ENCODE measurements at regions of chr5 and their contacts with region 1.

Region 1: DNA sequence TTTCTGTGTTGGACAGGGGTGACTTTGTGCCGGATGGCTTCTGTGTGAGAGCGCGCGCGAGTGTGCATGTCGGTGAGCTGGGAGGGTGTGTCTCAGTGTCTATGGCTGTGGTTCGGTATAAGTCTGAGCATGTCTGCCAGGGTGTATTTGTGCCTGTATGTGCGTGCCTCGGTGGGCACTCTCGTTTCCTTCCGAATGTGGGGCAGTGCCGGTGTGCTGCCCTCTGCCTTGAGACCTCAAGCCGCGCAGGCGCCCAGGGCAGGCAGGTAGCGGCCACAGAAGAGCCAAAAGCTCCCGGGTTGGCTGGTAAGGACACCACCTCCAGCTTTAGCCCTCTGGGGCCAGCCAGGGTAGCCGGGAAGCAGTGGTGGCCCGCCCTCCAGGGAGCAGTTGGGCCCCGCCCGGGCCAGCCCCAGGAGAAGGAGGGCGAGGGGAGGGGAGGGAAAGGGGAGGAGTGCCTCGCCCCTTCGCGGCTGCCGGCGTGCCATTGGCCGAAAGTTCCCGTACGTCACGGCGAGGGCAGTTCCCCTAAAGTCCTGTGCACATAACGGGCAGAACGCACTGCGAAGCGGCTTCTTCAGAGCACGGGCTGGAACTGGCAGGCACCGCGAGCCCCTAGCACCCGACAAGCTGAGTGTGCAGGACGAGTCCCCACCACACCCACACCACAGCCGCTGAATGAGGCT is at the start of gene ADRB2:
- DNase-seq: peak; percentile 96 to 98 (median 97)
- ATAC-seq: peak; percentile 97 to 98 (median 98)
- H3K4me3 ChIP-seq: peak within 1 kb of the TSS; percentile 55 to 84 (median 62)
- H3K27ac ChIP-seq: peak within 1 kb of the TSS; percentile 79 to 96 (median 90)
- H3K4me1 ChIP-seq: peaks cover 0 to 60% (median 16%) of the 10 kb centered on the region in 12 donors
- H3K27me3 ChIP-seq: no peaks in the 10 kb centered on the region
- CTCF ChIP-seq: peak in 2 of 12 donors; percentile 3 to 19
- POLR2A ChIP-seq: peak; percentile 90 to 99
- total RNA-seq, gene ADRB2: 3.4 to 8.3 (median 6.2) TPM

Region 2: DNA sequence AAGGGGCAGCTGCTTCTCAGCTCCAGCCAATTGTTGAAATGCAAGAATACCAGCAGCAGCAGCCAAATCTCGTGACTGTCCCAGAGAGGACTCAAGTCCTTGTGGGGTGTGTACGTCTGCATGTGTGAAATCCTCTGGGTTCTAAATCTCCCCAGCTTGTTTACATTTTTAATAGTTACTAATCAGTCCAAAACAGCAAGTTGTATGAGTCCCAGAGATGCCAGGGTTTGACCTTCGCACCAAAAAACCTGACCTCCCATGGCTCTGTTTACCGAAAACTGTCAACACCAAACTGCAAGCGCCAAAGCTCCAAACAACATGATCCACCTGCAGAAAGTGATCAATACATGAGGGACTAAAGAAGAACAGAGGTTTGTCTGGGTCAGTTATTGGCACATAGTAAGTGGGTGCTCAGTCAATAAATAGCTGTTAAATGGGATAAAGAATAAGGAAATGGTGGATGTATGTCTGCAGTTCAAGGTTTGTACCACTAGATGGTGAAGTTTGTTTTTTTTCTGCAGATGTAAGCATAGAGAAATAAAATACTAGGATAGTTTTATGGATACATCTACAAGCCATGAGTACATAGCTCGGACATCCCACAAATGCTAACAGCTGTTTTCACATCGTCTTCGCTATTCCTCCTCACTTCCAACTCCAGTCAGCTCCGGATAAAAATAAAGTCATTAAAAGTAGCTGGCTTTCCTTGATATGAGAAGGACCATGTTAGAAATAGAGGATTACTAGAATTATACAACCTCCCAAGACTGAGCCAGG is 85.0 kb before region 1 on chr5:
- intact Hi-C with region 1: loop called in 4 of 10 experiments (anchors 5 kb)
- DNase-seq: peak in 1 of 5 donors; percentile 43
- ATAC-seq: peak; percentile 55 to 78 (median 74)
- H3K4me3 ChIP-seq: no peak overlapping the region
- H3K27ac ChIP-seq: peak overlapping the region in 1 of 12 donors; percentile 12
- H3K4me1 ChIP-seq: peaks cover 0 to 33% (median 13%) of the 10 kb centered on the region in 12 donors
- H3K27me3 ChIP-seq: no peaks in the 10 kb centered on the region
- CTCF ChIP-seq: peak; percentile 63 to 81 (median 75)
- POLR2A ChIP-seq: no peak

Region 3: DNA sequence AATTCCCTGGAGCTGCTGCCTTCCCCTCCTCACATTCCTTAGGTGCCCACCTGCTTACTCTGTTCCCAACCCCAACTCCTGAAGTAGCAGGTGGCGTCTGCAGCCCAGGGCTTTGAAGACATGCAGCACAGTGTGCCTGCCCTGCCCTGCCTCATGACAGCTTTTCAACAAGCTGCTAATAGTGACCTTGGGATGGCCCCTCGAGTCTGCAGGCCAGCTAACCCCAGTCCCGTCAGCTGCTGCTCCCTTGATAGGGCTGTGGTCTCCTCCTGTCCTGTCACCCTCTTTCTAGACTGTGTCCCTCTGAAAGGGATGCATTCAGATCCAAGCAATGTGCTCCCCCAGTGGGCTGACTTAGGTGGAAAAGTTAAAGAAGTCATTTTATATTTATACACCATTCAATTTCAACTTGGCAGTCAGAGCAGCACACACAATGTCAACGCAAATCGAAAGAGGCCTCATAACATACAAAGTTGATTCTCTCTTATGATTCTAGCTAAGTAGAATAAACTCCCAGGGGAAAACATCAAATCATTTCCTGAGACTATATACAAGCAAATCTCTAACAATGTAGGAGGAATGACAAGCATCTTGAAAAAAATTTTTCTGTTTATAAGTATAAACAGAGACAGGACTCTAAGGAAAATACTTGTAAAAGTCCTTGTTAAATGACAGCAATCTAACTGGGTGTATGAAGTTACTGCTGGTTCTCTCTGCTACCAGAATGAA is 38.1 kb after region 1 on chr5:
- intact Hi-C with region 1: loop called in 2 of 10 experiments (anchors 2 to 5 kb)
- DNase-seq: peak in 3 of 5 donors; percentile 30 to 59 (median 37)
- ATAC-seq: peak; percentile 72 to 88 (median 86)
- H3K4me3 ChIP-seq: no peak overlapping the region
- H3K27ac ChIP-seq: peak overlapping the region; percentile 7 to 83 (median 68)
- H3K4me1 ChIP-seq: peaks cover 0 to 24% (median 16%) of the 10 kb centered on the region in 12 donors
- H3K27me3 ChIP-seq: no peaks in the 10 kb centered on the region
- CTCF ChIP-seq: peak in 2 of 12 donors; percentile 3 to 25
- POLR2A ChIP-seq: no peak

Region 4: DNA sequence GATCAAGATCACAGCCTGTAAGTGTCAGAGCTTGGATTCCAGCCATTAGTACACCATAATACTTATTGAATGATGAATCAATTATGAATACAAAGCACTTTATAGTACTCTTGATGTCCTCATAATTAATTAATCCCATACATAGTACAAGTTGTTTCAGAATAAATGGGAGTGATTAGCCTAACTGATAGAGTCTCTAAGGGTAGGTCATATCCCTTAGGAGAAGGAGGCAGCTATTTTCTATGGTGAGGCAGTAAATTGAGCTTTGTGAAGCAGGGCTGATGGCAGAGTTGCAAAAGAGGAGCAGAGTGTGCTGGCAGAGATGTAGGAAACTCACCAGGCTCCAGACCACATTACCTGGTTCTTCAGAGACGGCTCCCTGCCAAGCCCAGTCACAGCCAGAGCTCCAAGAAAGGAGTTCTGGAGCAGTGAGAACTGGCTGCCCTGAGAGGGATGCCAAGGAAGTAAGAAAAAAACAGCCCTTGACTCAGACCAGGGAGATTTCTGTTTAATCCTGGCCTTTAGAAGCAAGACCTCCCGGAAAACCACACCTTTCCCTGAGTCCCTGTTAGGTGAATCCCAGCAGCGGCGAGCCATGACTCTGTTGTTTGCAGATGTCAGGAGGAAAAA is 123.8 kb after region 1 on chr5:
- intact Hi-C with region 1: loop called in 7 of 10 experiments (anchors 2 to 10 kb)
- DNase-seq: peak; percentile 14 to 88 (median 62)
- ATAC-seq: peak; percentile 77 to 97 (median 86)
- H3K4me3 ChIP-seq: no peak overlapping the region
- H3K27ac ChIP-seq: peak overlapping the region in 7 of 12 donors; percentile 25 to 82 (median 48)
- H3K4me1 ChIP-seq: peaks cover 0 to 21% (median 0%) of the 10 kb centered on the region in 12 donors
- H3K27me3 ChIP-seq: no peaks in the 10 kb centered on the region
- CTCF ChIP-seq: no peak
- POLR2A ChIP-seq: no peak

Region 5: GRCh38 chr5:148963664-148964063 is 137.5 kb after region 1 on chr5:
- intact Hi-C with region 1: loop called in 9 of 10 experiments (anchors 2 to 10 kb)
- DNase-seq: no peak
- ATAC-seq: peak in 1 of 4 donors; percentile 33
- H3K4me3 ChIP-seq: no peak overlapping the region
- H3K27ac ChIP-seq: peak overlapping the region in 2 of 12 donors; percentile 22 to 76
- H3K4me1 ChIP-seq: peaks cover 0 to 43% (median 11%) of the 10 kb centered on the region in 12 donors
- H3K27me3 ChIP-seq: no peaks in the 10 kb centered on the region
- CTCF ChIP-seq: no peak
- POLR2A ChIP-seq: no peak

Region 6: GRCh38 chr5:149035372-149035790 is 209.2 kb after region 1 on chr5:
- intact Hi-C with region 1: loop called in 2 of 10 experiments (anchors 5 to 10 kb)
- DNase-seq: peak; percentile 71 to 88 (median 77)
- ATAC-seq: peak; percentile 82 to 94 (median 91)
- H3K4me3 ChIP-seq: no peak overlapping the region
- H3K27ac ChIP-seq: no peak overlapping the region
- H3K4me1 ChIP-seq: peaks cover 0 to 39% (median 8%) of the 10 kb centered on the region in 12 donors
- H3K27me3 ChIP-seq: no peaks in the 10 kb centered on the region
- CTCF ChIP-seq: peak; percentile 69 to 91 (median 86)
- POLR2A ChIP-seq: no peak

Region 7: DNA sequence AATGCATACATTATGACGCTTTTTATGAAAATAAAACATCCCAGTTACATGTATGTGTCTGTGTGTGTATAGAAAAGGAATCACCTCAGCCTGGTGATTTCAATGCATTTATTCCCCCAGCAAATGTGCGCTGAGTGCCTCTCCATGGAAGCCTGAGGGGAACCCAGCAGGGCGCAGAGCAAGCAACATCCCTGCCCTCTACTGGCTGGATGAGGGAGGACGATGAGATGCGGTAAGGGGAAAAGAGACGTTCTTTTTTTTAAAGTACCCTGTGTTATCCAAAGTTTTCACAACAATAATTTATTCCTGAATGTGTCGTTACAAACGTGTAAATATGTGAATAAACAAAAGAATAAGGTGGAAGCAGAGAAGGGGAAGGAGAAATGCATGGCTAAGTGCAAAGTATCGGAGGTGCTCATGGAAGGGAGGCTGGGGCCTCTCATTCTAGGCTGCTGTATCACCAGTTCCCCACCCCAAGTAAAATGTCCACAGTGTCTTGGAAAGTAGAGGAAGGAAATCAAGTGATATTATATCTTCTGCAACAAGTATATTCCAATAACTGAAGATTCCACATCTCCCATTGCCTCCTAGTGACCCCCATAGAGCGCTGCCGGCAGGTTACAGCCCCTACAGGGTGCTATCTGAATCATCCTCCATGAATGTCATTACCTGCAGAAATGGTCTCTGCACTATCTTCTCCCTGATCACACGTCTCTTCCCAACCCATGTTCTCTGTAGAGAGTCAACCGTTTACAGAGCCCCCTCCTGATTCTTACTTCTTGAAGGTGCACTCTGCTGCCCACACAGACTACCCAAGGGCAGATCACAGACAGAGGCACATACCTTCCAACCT is 302.1 kb after region 1 on chr5:
- intact Hi-C with region 1: loop called in 1 of 10 experiments (anchors 10 kb)
- DNase-seq: peak in 1 of 5 donors; percentile 42
- ATAC-seq: peak in 3 of 4 donors; percentile 53 to 79 (median 68)
- H3K4me3 ChIP-seq: no peak overlapping the region
- H3K27ac ChIP-seq: no peak overlapping the region
- H3K4me1 ChIP-seq: peaks cover 0 to 14% (median 8%) of the 10 kb centered on the region in 12 donors
- H3K27me3 ChIP-seq: no peaks in the 10 kb centered on the region
- CTCF ChIP-seq: peak; percentile 47 to 80 (median 63)
- POLR2A ChIP-seq: no peak